Activated CD4-positive, alpha-beta memory T cell treated with anti-CD3 and anti-CD28 coated beads for 36 hours (primary cell): ENCODE measurements at regions of chr9 and their contacts with region 1.

Region 1: DNA sequence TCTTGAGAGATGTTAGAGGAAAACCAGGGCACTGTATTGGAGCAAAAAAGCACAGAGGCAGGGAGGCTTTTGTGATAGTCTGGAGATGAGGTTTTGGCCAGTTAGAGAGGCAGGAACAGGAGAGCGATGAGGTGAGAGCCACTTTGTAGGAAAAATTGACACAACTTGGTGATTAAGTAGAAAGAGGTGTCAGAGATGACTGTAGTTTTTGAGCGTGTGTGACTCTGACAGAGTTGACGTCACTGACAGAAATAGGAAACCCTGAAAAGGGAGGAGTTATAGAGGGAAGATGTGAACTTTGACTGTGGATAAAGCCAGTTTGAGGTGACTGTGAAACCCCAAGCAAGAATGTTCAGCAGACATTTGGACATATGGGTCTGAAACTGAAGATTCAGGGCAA is 15.7 kb downstream of the NFX1 start:
- DNase-seq: peak; percentile 59
- H3K4me3 Mint-ChIP-seq: no peak overlapping the region
- H3K27ac Mint-ChIP-seq: no peak overlapping the region
- H3K4me1 Mint-ChIP-seq: peaks cover 25% of the 10 kb centered on the region
- H3K27me3 Mint-ChIP-seq: no peaks in the 10 kb centered on the region

Region 2: DNA sequence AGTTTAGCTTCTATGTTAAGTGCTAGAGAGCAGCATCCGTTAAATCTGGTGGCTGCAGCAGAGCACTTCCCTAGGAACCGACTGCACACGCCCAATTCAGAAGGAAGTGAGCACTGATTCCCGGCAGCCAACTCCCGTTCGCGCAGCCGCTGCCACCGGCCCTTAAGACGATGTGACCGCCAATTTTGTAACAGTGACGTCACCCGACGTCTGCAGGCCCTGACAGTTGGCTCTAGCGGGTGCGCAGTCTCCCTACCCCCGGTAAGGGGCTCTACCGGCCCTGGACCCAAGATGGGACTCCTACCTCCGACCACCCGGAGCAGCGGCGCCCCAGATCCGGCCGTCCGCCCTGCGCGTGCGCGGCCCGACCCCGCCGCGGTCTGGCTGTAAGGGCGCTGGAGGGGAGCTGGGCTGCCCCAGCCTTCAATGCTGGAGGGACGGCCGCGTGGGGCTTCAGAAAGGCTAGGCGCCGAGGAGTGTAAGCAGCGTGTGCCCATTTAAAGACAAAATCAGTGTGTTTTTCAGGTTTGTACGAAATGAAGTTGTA is 261.8 kb before region 1 on chr9:
- CTCF ChIA-PET with region 1: no interaction called
- POLR2A ChIA-PET with region 1: no interaction called
- intact Hi-C with region 1: no loop called
- DNase-seq: peak; percentile 81
- H3K4me3 Mint-ChIP-seq: peak overlapping the region; percentile 73
- H3K27ac Mint-ChIP-seq: peak overlapping the region; percentile 63
- H3K4me1 Mint-ChIP-seq: peaks cover 15% of the 10 kb centered on the region
- H3K27me3 Mint-ChIP-seq: no peaks in the 10 kb centered on the region

Region 3: DNA sequence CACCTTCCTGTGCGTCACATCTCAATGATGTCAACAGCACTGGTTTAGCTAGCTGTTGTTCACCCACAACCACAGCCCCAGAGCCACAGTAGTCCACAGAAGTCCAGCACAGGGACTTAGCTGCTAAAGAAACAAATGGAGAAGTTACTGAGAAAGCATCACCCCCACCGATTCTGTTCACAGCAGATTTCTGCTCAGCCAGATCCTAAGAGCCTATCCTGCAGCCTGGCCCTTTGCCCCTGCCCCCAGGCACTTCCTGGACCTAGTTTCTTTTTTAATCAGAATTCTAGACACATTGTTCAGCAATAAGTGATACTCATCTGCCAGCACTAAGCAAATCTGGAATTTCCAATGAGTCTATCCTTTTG is 146.3 kb before region 1 on chr9:
- CTCF ChIA-PET with region 1: no interaction called
- POLR2A ChIA-PET with region 1: no interaction called
- intact Hi-C with region 1: loop called (anchors 5 kb)
- DNase-seq: peak; percentile 85
- H3K4me3 Mint-ChIP-seq: peak overlapping the region; percentile 66
- H3K27ac Mint-ChIP-seq: peak overlapping the region; percentile 97
- H3K4me1 Mint-ChIP-seq: peaks cover 94% of the 10 kb centered on the region
- H3K27me3 Mint-ChIP-seq: no peaks in the 10 kb centered on the region

Region 4: GRCh38 chr9:33320568-33321261 is 14.7 kb after region 1 on chr9:
- CTCF ChIA-PET with region 1: no interaction called
- POLR2A ChIA-PET with region 1: interaction called, 4 read pairs
- intact Hi-C with region 1: loop called (anchors 1 kb)
- DNase-seq: peak; percentile 25
- H3K4me3 Mint-ChIP-seq: no peak overlapping the region
- H3K27ac Mint-ChIP-seq: peak overlapping the region; percentile 80
- H3K4me1 Mint-ChIP-seq: peaks cover 27% of the 10 kb centered on the region
- H3K27me3 Mint-ChIP-seq: no peaks in the 10 kb centered on the region

Region 5: GRCh38 chr9:33354651-33355211 is 48.7 kb after region 1 on chr9:
- CTCF ChIA-PET with region 1: no interaction called
- POLR2A ChIA-PET with region 1: no interaction called
- intact Hi-C with region 1: no loop called
- DNase-seq: no peak
- H3K4me3 Mint-ChIP-seq: no peak overlapping the region
- H3K27ac Mint-ChIP-seq: no peak overlapping the region
- H3K4me1 Mint-ChIP-seq: no peaks in the 10 kb centered on the region
- H3K27me3 Mint-ChIP-seq: no peaks in the 10 kb centered on the region